T-cell (primary cell): ENCODE measurements at regions of chr16 and their contacts with region 1.

Region 1: GRCh38 chr16:69812688-69813014 is 50.5 kb downstream of the WWP2 start:
- DNase-seq: no peak
- ATAC-seq: no peak
- H3K4me3 ChIP-seq: no peak overlapping the region
- H3K4me3 Mint-ChIP-seq: no peak overlapping the region
- H3K27ac ChIP-seq: no peak overlapping the region
- H3K27ac Mint-ChIP-seq: no peak overlapping the region
- H3K4me1 ChIP-seq: no peaks in the 10 kb centered on the region
- H3K4me1 Mint-ChIP-seq: peaks cover 0 to 2% (median 1%) of the 10 kb centered on the region in 3 donors
- H3K27me3 ChIP-seq: no peaks in the 10 kb centered on the region
- H3K27me3 Mint-ChIP-seq: no peaks in the 10 kb centered on the region

Region 2: DNA sequence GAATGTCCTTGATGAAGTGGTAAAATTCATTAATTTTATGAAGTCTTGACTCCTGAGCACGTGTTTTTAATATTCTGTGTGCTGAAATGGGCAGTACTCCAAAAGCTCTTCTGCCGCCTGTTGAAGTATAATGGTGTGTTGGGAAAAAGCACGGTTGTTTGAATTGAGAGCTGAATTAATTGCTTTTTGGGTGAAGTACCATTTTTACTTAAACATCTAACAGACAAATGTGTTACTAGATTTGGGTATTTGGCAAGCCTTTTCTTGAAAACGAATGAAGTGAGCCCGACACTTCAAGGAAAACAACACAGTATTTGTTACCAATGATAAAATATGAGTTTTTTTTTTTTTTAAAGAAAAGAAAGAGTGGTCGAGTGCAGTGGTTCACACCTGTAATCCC is 28.1 kb before region 1 on chr16:
- CTCF ChIA-PET with region 1: no interaction called
- POLR2A ChIA-PET with region 1: interaction called in 1 of 2 experiments, 11 read pairs
- DNase-seq: no peak
- ATAC-seq: no peak
- H3K4me3 ChIP-seq: no peak overlapping the region
- H3K4me3 Mint-ChIP-seq: no peak overlapping the region
- H3K27ac ChIP-seq: no peak overlapping the region
- H3K27ac Mint-ChIP-seq: no peak overlapping the region
- H3K4me1 ChIP-seq: no peaks in the 10 kb centered on the region
- H3K4me1 Mint-ChIP-seq: peaks cover 7 to 11% (median 9%) of the 10 kb centered on the region in 3 donors
- H3K27me3 ChIP-seq: no peaks in the 10 kb centered on the region
- H3K27me3 Mint-ChIP-seq: no peaks in the 10 kb centered on the region

Region 3: GRCh38 chr16:69839798-69840409 is 27.3 kb after region 1 on chr16:
- CTCF ChIA-PET with region 1: no interaction called
- POLR2A ChIA-PET with region 1: no interaction called
- DNase-seq: no peak
- ATAC-seq: no peak
- H3K4me3 ChIP-seq: no peak overlapping the region
- H3K4me3 Mint-ChIP-seq: no peak overlapping the region
- H3K27ac ChIP-seq: no peak overlapping the region
- H3K27ac Mint-ChIP-seq: peak overlapping the region in 1 of 2 donors; percentile 43
- H3K4me1 ChIP-seq: no peaks in the 10 kb centered on the region
- H3K4me1 Mint-ChIP-seq: no peaks in the 10 kb centered on the region
- H3K27me3 ChIP-seq: no peaks in the 10 kb centered on the region
- H3K27me3 Mint-ChIP-seq: no peaks in the 10 kb centered on the region